Activated B cell treated with CpG ODN at 0.5 μM for 24 hours (primary cell): ENCODE measurements at regions of chr1 and their contacts with region 1.

Region 1: GRCh38 chr1:6866825-6867224 is 81.6 kb downstream of the CAMTA1 start:
- DNase-seq: no peak
- ATAC-seq: no peak
- H3K4me3 Mint-ChIP-seq: no peak overlapping the region
- H3K27ac Mint-ChIP-seq: no peak overlapping the region
- H3K4me1 Mint-ChIP-seq: peaks cover 10% of the 10 kb centered on the region
- H3K27me3 Mint-ChIP-seq: no peaks in the 10 kb centered on the region
- CTCF ChIP-seq: no peak

Region 2: GRCh38 chr1:7795406-7795805 is 928.6 kb after region 1 on chr1:
- CTCF ChIA-PET with region 1: no interaction called
- POLR2A ChIA-PET with region 1: interaction called, 10 read pairs
- intact Hi-C with region 1: no loop called
- DNase-seq: no peak
- ATAC-seq: no peak
- H3K4me3 Mint-ChIP-seq: no peak overlapping the region
- H3K27ac Mint-ChIP-seq: no peak overlapping the region
- H3K4me1 Mint-ChIP-seq: no peaks in the 10 kb centered on the region
- H3K27me3 Mint-ChIP-seq: no peaks in the 10 kb centered on the region
- CTCF ChIP-seq: no peak